ENCODE measurements at regions of chr17 and their contacts with region 1.

Region 1: DNA sequence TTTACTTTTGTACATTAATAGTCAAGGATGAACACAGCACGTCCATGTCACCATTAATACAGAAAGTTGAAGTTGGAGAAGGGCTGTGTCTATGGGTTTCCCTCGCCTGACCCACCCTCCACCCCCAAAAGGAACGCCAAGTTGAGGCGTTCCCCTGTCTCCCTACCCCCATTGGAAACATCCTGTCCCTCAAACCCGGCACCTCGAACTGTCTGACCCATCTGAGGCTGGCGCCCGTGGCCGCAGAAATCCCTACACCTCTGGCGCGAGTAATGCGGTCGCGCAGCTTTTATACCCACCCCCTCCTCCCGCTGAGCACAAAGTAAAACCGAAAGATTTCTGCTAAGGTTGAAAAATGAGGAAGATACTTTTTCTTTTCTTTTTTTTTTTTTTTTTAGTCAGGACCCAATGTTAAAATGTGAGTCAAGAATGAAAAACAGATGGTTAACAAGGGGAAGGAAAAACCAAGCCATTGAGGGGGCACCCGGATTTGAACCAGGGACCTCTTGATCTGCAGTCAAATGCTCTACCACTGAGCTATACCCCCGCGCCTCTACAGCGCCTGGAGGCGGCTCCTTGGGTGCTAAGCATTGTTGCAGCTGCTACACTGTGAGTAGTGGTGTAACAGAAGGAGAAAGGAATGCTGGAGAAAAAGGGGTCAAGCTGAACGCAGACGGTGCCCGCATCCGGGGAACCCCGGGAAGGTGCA is 887 bp upstream of the LASP1 start:
- DNase-seq: peak; percentile 83 to 85
- H3K4me3 ChIP-seq: peak overlapping the region; percentile 97
- H3K27ac ChIP-seq: peak overlapping the region; percentile 35
- H3K4me1 ChIP-seq: peaks cover 39% of the 10 kb centered on the region
- H3K27me3 ChIP-seq: no peaks in the 10 kb centered on the region
- CTCF ChIP-seq: no peak

Region 2: GRCh38 chr17:38454516-38454915 is 414.5 kb before region 1 on chr17:
- CTCF ChIA-PET with region 1: no interaction called
- POLR2A ChIA-PET with region 1: no interaction called
- intact Hi-C with region 1: loop called (anchors 5 kb)
- DNase-seq: peak; percentile 74 to 84
- H3K4me3 ChIP-seq: peak overlapping the region; percentile 67
- H3K27ac ChIP-seq: peak overlapping the region; percentile 38
- H3K4me1 ChIP-seq: peaks cover 65% of the 10 kb centered on the region
- H3K27me3 ChIP-seq: no peaks in the 10 kb centered on the region
- CTCF ChIP-seq: no peak

Region 3: DNA sequence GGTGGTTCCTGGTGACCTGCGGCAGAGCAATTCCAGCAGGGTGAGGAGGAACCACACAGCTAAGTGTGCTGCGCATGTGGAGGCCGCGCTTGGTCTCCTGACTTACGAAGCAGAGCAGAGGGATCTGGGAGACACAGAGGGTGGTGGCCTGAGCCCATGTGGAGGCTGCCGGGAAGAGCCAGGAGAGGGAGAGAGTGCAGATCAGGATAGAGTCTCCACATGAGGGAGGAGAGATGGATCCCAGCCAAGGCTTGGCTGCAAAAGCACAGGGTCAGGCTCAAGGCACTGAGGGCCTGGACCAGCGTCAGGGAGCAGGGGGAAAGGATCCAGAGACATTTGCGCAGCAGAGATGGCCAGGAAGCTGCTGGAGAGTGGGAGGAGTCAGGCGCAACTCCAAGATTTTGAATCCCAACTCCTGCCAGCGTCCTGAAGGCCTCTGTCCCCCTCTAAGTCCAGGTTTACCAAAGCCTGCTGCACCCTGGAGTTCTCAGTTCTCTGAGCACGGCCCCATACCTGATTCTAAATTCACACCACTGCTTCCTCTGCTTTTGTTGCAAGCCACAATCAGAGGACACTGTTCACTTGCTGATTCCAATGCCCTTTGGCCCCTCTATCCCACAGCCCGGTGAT is 175.2 kb before region 1 on chr17:
- CTCF ChIA-PET with region 1: no interaction called
- POLR2A ChIA-PET with region 1: no interaction called
- intact Hi-C with region 1: no loop called
- DNase-seq: no peak
- H3K4me3 ChIP-seq: no peak overlapping the region
- H3K27ac ChIP-seq: no peak overlapping the region
- H3K4me1 ChIP-seq: no peaks in the 10 kb centered on the region
- H3K27me3 ChIP-seq: no peaks in the 10 kb centered on the region
- CTCF ChIP-seq: no peak

Region 4: DNA sequence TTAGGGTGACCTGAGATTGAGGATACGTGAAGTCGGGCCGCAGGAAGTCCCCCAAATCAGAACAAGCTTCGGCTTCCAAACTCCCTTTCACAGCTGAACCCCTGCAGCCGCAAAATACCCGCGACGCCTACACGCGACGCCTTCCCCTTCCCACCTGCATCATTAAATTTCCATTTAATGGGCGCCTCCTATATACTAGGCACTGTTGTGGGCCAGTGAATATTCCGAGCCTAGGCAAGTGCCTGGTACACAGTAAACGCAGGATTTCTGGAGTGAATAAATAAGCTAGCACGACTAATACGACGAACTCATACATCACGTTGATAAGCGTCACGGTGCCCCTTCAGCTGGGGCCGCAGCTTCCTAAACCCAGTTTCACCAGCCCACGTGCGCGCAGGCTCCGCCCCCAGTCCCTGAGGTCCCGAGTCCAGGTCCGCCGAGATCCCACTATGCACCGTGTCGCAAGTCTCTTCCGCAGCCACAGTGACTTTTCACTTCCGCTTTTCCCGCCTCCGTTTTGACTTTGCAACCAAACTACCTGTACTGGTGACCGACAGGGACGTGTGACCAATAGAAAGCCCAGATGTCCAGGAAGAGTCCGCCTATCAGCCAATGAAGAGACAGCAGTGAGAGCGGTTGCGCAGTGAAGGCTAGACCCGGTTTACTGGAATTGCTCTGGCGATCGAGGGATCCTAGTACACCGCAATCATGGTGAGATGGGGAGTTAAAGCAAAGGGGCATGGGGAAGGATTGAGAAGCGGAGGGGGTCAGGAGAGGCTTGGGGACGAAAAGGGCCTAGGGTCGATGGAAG is 116.6 kb before region 1 on chr17 and contains the start of gene PSMB3:
- CTCF ChIA-PET with region 1: no interaction called
- POLR2A ChIA-PET with region 1: no interaction called
- intact Hi-C with region 1: loop called (anchors 2 kb)
- DNase-seq: peak; percentile 95 to 99
- H3K4me3 ChIP-seq: peak within 1 kb of the TSS; percentile 92
- H3K27ac ChIP-seq: peak within 1 kb of the TSS; percentile 79
- H3K4me1 ChIP-seq: peaks cover 10% of the 10 kb centered on the region
- H3K27me3 ChIP-seq: no peaks in the 10 kb centered on the region
- CTCF ChIP-seq: no peak
- total RNA-seq, gene PSMB3: 262 and 278 TPM in 2 replicates

Region 5: DNA sequence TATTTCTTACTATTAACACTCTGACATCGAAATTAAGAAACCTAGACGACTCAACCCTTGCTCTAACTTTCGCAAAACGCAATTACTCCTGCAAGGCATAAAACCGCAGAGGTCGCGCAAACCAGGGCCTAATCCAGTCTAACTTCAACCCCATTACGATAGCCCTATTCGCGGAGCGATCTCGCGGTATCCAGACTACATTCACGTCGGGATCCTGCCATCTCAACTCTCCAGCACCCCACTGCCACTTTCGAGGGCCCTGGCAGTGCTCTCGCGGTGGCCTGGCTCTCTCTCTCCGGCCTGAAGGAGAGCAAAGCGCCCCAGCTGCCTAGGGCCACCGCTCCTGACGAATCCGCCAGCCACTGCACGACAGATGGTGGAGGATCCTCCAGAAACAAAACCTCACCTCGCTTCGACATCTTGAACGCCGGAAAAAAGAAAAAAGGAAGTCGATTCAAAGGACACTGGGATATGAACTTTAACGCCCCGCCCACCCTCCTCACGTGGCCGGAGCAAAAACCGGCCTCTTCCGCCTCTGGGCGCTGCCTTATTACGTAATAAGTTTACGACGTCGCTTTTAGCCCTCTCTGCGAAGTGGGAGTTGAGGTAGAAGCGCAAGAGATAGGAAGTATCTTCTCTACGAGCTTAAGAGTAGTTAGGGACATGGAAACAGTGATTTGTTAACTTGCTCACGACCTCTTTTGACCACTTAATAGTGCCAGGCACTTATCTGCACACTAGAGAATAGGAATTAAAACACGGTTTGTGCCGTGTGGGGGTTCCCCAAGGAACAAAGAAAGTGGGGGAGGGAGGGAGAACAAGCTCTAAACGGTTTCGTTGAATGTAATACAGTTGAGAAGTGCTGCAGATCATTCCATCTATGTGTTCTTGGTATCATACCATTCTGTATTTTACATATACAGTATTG is 15.4 kb before region 1 on chr17 and contains the start of gene RPL23:
- CTCF ChIA-PET with region 1: interaction called, 3 read pairs
- POLR2A ChIA-PET with region 1: interaction called, 29 read pairs
- intact Hi-C with region 1: no loop called
- DNase-seq: peak; percentile 85 to 91
- H3K4me3 ChIP-seq: peak within 1 kb of the TSS; percentile 88
- H3K27ac ChIP-seq: peak within 1 kb of the TSS; percentile 90
- H3K4me1 ChIP-seq: peaks cover 27% of the 10 kb centered on the region
- H3K27me3 ChIP-seq: no peaks in the 10 kb centered on the region
- CTCF ChIP-seq: no peak
- total RNA-seq, gene RPL23: 1,146 and 1,262 TPM in 2 replicates

Region 6: GRCh38 chr17:38967290-38967738 is 98.3 kb after region 1 on chr17 and contains the start of gene FBXO47:
- CTCF ChIA-PET with region 1: no interaction called
- POLR2A ChIA-PET with region 1: interaction called, 21 read pairs
- intact Hi-C with region 1: no loop called
- DNase-seq: peak; percentile 75 to 89
- H3K4me3 ChIP-seq: peak within 1 kb of the TSS; percentile 47; the same call in 1 of the 2 replicates
- H3K27ac ChIP-seq: no peak within 1 kb of the TSS
- H3K4me1 ChIP-seq: no peaks in the 10 kb centered on the region
- H3K27me3 ChIP-seq: no peaks in the 10 kb centered on the region
- CTCF ChIP-seq: no peak
- total RNA-seq, gene FBXO47: not detected in 2 replicates

Region 7: GRCh38 chr17:39001703-39002637 is 133.0 kb after region 1 on chr17:
- CTCF ChIA-PET with region 1: no interaction called
- POLR2A ChIA-PET with region 1: no interaction called
- intact Hi-C with region 1: no loop called
- DNase-seq: peak; percentile 81 to 86
- H3K4me3 ChIP-seq: 0 out of 2 replicates have a peak overlapping the region, but pooled peaks have one; percentile 23
- H3K27ac ChIP-seq: peak overlapping the region; percentile 24
- H3K4me1 ChIP-seq: peaks cover 18% of the 10 kb centered on the region
- H3K27me3 ChIP-seq: no peaks in the 10 kb centered on the region
- CTCF ChIP-seq: no peak

Region 8: GRCh38 chr17:39057701-39058206 is 188.8 kb after region 1 on chr17:
- CTCF ChIA-PET with region 1: no interaction called
- POLR2A ChIA-PET with region 1: interaction called, 3 read pairs
- intact Hi-C with region 1: loop called (anchors 5 kb)
- DNase-seq: no peak
- H3K4me3 ChIP-seq: peak overlapping the region; percentile 73
- H3K27ac ChIP-seq: no peak overlapping the region
- H3K4me1 ChIP-seq: peaks cover 12% of the 10 kb centered on the region
- H3K27me3 ChIP-seq: no peaks in the 10 kb centered on the region
- CTCF ChIP-seq: no peak

Region 9: GRCh38 chr17:39096508-39097149 is 227.7 kb after region 1 on chr17:
- CTCF ChIA-PET with region 1: no interaction called
- POLR2A ChIA-PET with region 1: no interaction called
- intact Hi-C with region 1: no loop called
- DNase-seq: no peak
- H3K4me3 ChIP-seq: no peak overlapping the region
- H3K27ac ChIP-seq: no peak overlapping the region
- H3K4me1 ChIP-seq: no peaks in the 10 kb centered on the region
- H3K27me3 ChIP-seq: peaks cover 21% of the 10 kb centered on the region
- CTCF ChIP-seq: no peak

Region 10: GRCh38 chr17:39225959-39226683 is 357.1 kb after region 1 on chr17:
- CTCF ChIA-PET with region 1: no interaction called
- POLR2A ChIA-PET with region 1: interaction called, 25 read pairs
- intact Hi-C with region 1: no loop called
- DNase-seq: peak in 1 of 2 experiments; percentile 40
- H3K4me3 ChIP-seq: no peak overlapping the region
- H3K27ac ChIP-seq: no peak overlapping the region
- H3K4me1 ChIP-seq: peaks cover 10% of the 10 kb centered on the region; the same call in 1 of the 2 replicates
- H3K27me3 ChIP-seq: no peaks in the 10 kb centered on the region
- CTCF ChIP-seq: no peak

Region 11: DNA sequence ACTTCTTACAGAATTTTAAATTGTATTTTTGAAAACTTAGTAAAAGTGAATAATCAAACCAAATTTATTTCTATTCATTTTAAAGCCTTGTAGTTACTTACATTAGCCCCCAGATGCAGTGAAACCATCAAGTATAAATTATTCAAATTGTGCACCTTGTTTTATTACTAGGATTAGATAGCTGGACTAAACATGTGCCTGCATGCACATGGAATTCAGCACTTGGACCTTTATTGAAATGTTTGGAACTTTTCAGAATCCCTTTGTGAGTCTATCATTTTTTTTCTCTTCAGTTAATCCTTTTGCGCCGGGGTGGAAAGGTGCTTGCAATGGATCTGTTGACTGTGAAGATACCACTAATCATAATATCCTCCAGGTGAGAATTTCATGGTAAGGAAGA is 1003.8 kb after region 1 on chr17:
- CTCF ChIA-PET with region 1: no interaction called
- POLR2A ChIA-PET with region 1: no interaction called
- intact Hi-C with region 1: no loop called
- DNase-seq: no peak
- H3K4me3 ChIP-seq: no peak overlapping the region
- H3K27ac ChIP-seq: no peak overlapping the region
- H3K4me1 ChIP-seq: no peaks in the 10 kb centered on the region
- H3K27me3 ChIP-seq: no peaks in the 10 kb centered on the region
- CTCF ChIP-seq: no peak